CD8-positive, alpha-beta memory T cell (primary cell): ENCODE measurements at regions of chr17 and their contacts with region 1.

Region 1: GRCh38 chr17:80008383-80008840 is 27.3 kb downstream of the TBC1D16 start:
- DNase-seq: peak; percentile 54 to 75 (median 63)
- H3K4me3 ChIP-seq: no peak overlapping the region
- H3K4me3 Mint-ChIP-seq: no peak overlapping the region
- H3K27ac ChIP-seq: no peak overlapping the region
- H3K27ac Mint-ChIP-seq: no peak overlapping the region
- H3K4me1 ChIP-seq: peaks cover 9% of the 10 kb centered on the region
- H3K4me1 Mint-ChIP-seq: peaks cover 5 to 12% (median 8%) of the 10 kb centered on the region in 3 donors
- H3K27me3 ChIP-seq: no peaks in the 10 kb centered on the region
- H3K27me3 Mint-ChIP-seq: peaks cover 0 to 3% of the 10 kb centered on the region in 2 donors

Region 2: DNA sequence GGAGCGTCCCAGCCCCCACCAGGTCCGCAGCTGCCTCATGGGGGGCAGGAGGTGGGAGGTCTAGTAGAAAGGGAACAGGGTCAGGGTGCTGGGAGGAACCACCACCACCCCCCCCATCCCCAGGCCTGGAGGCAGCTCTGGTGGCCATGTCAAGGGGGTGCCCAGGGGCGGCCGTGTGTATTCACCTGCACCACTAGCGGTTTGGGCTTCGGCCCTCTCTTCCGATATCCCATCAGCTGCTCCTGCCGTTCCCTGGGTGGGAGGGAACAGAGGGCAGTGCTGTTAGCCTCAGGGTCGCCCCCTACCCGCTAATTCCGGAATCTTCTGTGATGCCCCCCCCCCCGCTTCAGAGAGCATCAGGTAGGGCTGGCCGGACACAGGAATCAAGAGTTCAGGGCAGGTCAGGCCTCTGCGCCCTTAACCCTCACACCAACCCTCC is 172.9 kb before region 1 on chr17:
- CTCF ChIA-PET with region 1: no interaction called
- POLR2A ChIA-PET with region 1: no interaction called
- DNase-seq: peak in 1 of 5 donors; percentile 45
- H3K4me3 ChIP-seq: no peak overlapping the region
- H3K4me3 Mint-ChIP-seq: peak overlapping the region in 4 of 7 donors; percentile 10 to 74 (median 46)
- H3K27ac ChIP-seq: no peak overlapping the region
- H3K27ac Mint-ChIP-seq: peak overlapping the region in 1 of 8 donors; percentile 54
- H3K4me1 ChIP-seq: peaks cover 40% of the 10 kb centered on the region
- H3K4me1 Mint-ChIP-seq: peaks cover 21 to 57% (median 30%) of the 10 kb centered on the region in 3 donors
- H3K27me3 ChIP-seq: peaks cover 8% of the 10 kb centered on the region
- H3K27me3 Mint-ChIP-seq: peaks cover 5 to 12% of the 10 kb centered on the region in 2 donors

Region 3: DNA sequence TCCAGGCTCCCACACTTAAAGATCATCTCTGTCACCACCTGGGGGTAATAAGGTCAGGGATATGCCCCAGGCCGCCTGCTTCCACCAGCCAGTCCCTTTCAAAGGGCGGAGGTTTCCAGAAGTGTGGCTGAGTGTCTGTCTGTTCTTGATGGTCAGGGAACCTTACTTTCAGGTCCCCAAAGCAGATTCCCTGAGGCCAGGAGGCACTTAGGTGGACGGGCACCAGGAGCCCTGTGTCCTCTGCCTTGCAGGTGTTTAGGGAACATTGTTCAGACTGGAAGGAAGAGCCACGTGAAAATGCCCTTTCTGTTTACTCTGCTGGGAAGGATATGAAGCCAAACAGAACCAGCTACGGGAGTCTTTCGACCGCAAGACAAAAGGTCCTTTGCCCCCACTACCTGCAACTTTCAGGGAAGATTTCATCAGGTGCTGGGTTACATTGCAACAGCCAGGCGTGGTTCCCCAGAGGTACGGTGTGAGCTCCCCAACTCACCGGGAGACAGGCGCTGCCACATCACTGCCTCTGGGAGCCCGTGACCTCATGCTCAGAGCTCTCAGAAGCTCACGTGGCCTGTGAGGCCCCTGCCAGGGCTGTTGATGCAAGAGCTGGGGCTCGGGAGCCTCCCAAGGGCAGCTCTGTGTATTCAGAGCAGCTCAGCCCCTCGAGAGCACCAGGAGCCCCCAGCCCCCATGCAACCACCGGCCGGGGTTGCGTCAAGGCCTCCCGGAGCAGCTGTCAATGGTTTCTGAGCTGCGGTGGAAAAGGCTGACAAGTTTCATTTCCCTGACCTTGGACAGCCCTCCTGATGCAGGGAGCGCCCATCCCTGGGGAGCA is 15.0 kb before region 1 on chr17:
- CTCF ChIA-PET with region 1: interaction called, 23 read pairs
- POLR2A ChIA-PET with region 1: no interaction called
- DNase-seq: peak in 1 of 5 donors; percentile 33
- H3K4me3 ChIP-seq: no peak overlapping the region
- H3K4me3 Mint-ChIP-seq: peak overlapping the region in 3 of 7 donors; percentile 8 to 65 (median 8)
- H3K27ac ChIP-seq: no peak overlapping the region
- H3K27ac Mint-ChIP-seq: peak overlapping the region in 1 of 8 donors; percentile 11
- H3K4me1 ChIP-seq: peaks cover 50% of the 10 kb centered on the region
- H3K4me1 Mint-ChIP-seq: peaks cover 32 to 50% (median 35%) of the 10 kb centered on the region in 3 donors
- H3K27me3 ChIP-seq: no peaks in the 10 kb centered on the region
- H3K27me3 Mint-ChIP-seq: peaks cover 0 to 13% of the 10 kb centered on the region in 2 donors

Region 4: GRCh38 chr17:80029258-80029974 is 21.0 kb after region 1 on chr17:
- CTCF ChIA-PET with region 1: interaction called, 15 read pairs
- POLR2A ChIA-PET with region 1: no interaction called
- DNase-seq: no peak
- H3K4me3 ChIP-seq: no peak overlapping the region
- H3K4me3 Mint-ChIP-seq: peak overlapping the region in 1 of 7 donors; percentile 8
- H3K27ac ChIP-seq: no peak overlapping the region
- H3K27ac Mint-ChIP-seq: no peak overlapping the region
- H3K4me1 ChIP-seq: no peaks in the 10 kb centered on the region
- H3K4me1 Mint-ChIP-seq: peaks cover 0 to 2% (median under 1%) of the 10 kb centered on the region in 3 donors
- H3K27me3 ChIP-seq: peaks cover 5% of the 10 kb centered on the region
- H3K27me3 Mint-ChIP-seq: peaks cover 2 to 12% of the 10 kb centered on the region in 2 donors